ENCODE measurements at regions of chr11 and their contacts with region 1.

Region 1: GRCh38 chr11:123407130-123407995 is 22.7 kb upstream of the GRAMD1B start:
- DNase-seq: peak; percentile 64 to 84 (median 78)
- H3K4me3 ChIP-seq: no peak overlapping the region
- H3K4me3 Mint-ChIP-seq: no peak overlapping the region
- H3K27ac ChIP-seq: no peak overlapping the region
- H3K27ac Mint-ChIP-seq: no peak overlapping the region
- H3K4me1 ChIP-seq: peaks cover 12 to 16% of the 10 kb centered on the region in 2 donors
- H3K4me1 Mint-ChIP-seq: peaks cover 18% of the 10 kb centered on the region
- H3K27me3 ChIP-seq: no peaks in the 10 kb centered on the region
- H3K27me3 Mint-ChIP-seq: no peaks in the 10 kb centered on the region
- CTCF ChIP-seq: peak; percentile 82

Region 2: GRCh38 chr11:123251657-123252344 is 155.6 kb before region 1 on chr11:
- intact Hi-C with region 1: no loop called
- DNase-seq: no peak
- H3K4me3 ChIP-seq: no peak overlapping the region
- H3K4me3 Mint-ChIP-seq: no peak overlapping the region
- H3K27ac ChIP-seq: no peak overlapping the region
- H3K27ac Mint-ChIP-seq: no peak overlapping the region
- H3K4me1 ChIP-seq: no peaks in the 10 kb centered on the region
- H3K4me1 Mint-ChIP-seq: peaks cover 6% of the 10 kb centered on the region
- H3K27me3 ChIP-seq: no peaks in the 10 kb centered on the region
- H3K27me3 Mint-ChIP-seq: peaks cover 8 to 16% (median 8%) of the 10 kb centered on the region in 3 donors
- CTCF ChIP-seq: no peak

Region 3: DNA sequence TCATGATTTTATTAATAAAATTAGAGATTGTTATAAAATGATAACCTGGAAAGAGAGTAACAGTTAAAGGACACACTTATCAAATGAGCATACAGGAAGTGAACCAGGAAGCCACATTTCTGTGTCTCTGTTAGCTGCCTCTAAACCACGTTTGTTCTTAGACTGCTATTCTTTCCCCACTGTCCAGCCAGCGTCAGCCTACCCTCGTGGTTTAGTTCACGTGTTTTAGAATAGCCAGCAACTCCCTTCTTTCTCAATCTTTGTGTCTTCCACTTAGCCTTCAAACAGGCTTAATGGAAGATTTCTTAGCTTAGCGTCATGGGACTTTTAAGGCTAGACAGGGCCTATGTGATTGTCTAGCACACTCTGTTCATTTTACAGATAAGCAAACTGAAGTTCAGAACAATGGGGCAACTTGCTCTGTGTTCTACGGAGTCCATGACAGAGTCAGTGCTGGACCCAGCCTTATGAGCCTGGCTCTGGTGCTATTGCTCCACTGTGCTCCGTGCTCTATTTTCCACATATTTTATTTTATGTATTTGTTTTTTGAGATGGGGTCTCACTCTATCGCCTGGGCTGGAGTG is 49.9 kb after region 1 on chr11:
- intact Hi-C with region 1: no loop called
- DNase-seq: peak; percentile 85 to 95 (median 93)
- H3K4me3 ChIP-seq: peak overlapping the region in 1 of 3 experiments; percentile 12
- H3K4me3 Mint-ChIP-seq: no peak overlapping the region
- H3K27ac ChIP-seq: peak overlapping the region; percentile 88 to 92
- H3K27ac Mint-ChIP-seq: peak overlapping the region; percentile 87 to 93 (median 90)
- H3K4me1 ChIP-seq: peaks cover 55 to 57% of the 10 kb centered on the region in 2 donors
- H3K4me1 Mint-ChIP-seq: peaks cover 61% of the 10 kb centered on the region
- H3K27me3 ChIP-seq: no peaks in the 10 kb centered on the region
- H3K27me3 Mint-ChIP-seq: no peaks in the 10 kb centered on the region
- CTCF ChIP-seq: no peak

Region 4: GRCh38 chr11:123478352-123478987 is 71.1 kb after region 1 on chr11:
- intact Hi-C with region 1: loop called in 1 of 2 experiments (anchors 2 kb)
- DNase-seq: peak; percentile 56 to 83 (median 79)
- H3K4me3 ChIP-seq: peak overlapping the region; percentile 19 to 78 (median 74)
- H3K4me3 Mint-ChIP-seq: peak overlapping the region; percentile 54 to 83
- H3K27ac ChIP-seq: peak overlapping the region; percentile 26 to 73
- H3K27ac Mint-ChIP-seq: peak overlapping the region; percentile 77 to 94 (median 86)
- H3K4me1 ChIP-seq: peaks cover 51 to 57% of the 10 kb centered on the region in 2 donors
- H3K4me1 Mint-ChIP-seq: peaks cover 75% of the 10 kb centered on the region
- H3K27me3 ChIP-seq: no peaks in the 10 kb centered on the region
- H3K27me3 Mint-ChIP-seq: no peaks in the 10 kb centered on the region
- CTCF ChIP-seq: peak; percentile 86

Region 5: DNA sequence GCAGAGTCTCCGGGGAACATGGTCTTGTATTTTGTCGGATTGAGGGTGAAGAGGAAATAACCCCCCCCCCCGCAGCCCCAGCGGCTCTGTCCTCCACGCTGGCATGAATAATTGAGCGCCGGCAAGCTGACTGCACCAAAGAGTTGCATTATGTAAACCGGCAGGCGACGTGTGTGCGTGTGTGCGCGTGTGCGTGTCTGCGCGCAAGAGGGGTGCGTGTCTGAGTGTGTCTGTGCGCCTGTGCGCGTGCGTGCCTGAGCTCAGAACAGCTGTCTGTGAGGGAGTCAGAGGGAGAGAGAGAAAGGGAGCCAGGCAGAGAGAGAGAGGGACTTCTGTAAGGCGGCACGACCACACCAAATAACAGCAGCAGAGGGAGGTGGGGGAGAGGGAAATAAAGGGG is 152.6 kb after region 1 on chr11:
- intact Hi-C with region 1: loop called in 1 of 2 experiments (anchors 10 kb)
- DNase-seq: peak; percentile 46 to 84 (median 58)
- H3K4me3 ChIP-seq: peak overlapping the region in 1 of 3 experiments; percentile 45
- H3K4me3 Mint-ChIP-seq: peak overlapping the region; percentile 64 to 93
- H3K27ac ChIP-seq: no peak overlapping the region
- H3K27ac Mint-ChIP-seq: peak overlapping the region in 4 of 7 donors; percentile 31 to 60 (median 56)
- H3K4me1 ChIP-seq: peaks cover 13 to 20% of the 10 kb centered on the region in 2 donors
- H3K4me1 Mint-ChIP-seq: peaks cover 38% of the 10 kb centered on the region
- H3K27me3 ChIP-seq: no peaks in the 10 kb centered on the region
- H3K27me3 Mint-ChIP-seq: peaks cover 0 to 7% (median 3%) of the 10 kb centered on the region in 3 donors
- CTCF ChIP-seq: no peak

Measured in CD14-positive monocyte (primary cell).